Activated T-helper 1 cell treated with anti-CD3 and anti-CD28 coated beads, Interleukin-12 subunit alpha, Interleukin-12 subunit beta, Interleukin-2, Interleukin-4 antibody, amounts not matched to agents 30 ng/mL and 10 ng/mL and 1 ng/mL, durations not matched to agents 14 hours and 24 hours and 36 hours (primary cell): ENCODE measurements at regions of chr4 and their contacts with region 1.

Region 1: DNA sequence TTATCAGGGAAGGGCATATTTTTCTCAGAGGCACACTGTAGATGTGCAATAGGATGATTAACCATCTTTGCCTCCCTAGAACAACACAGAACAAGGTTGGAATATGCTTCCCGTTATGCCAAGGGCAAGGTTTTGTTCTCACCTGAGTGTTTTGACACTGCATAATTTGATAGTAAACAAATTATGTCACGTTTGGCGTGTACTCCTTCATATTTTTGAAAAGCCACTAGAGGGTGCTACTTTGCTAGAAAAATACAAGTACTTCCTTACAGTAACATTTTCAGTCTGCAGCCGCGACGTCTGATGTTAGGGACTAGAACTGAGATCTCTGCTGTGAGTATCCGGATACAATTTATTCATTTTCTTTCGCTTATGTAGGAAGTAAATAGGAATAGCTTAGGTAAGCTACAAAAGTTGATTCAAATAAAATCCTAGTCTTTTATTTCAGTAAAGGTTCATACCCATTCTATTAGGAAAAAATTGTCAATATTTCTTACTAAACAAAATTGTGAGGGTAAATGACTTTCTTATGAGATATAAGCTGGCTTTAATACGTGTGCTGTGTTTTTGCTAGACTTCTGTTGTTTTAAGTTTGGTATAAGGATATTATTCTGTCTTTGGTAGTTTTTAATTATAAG is 181.1 kb upstream of the WDFY3 start:
- DNase-seq: no peak
- H3K4me3 Mint-ChIP-seq: no peak overlapping the region
- H3K27ac Mint-ChIP-seq: no peak overlapping the region
- H3K4me1 Mint-ChIP-seq: no peaks in the 10 kb centered on the region
- H3K27me3 Mint-ChIP-seq: no peaks in the 10 kb centered on the region

Region 2: GRCh38 chr4:84938316-84938715 is 209.2 kb before region 1 on chr4:
- intact Hi-C with region 1: no loop called
- DNase-seq: no peak
- H3K4me3 Mint-ChIP-seq: no peak overlapping the region
- H3K27ac Mint-ChIP-seq: no peak overlapping the region
- H3K4me1 Mint-ChIP-seq: no peaks in the 10 kb centered on the region
- H3K27me3 Mint-ChIP-seq: no peaks in the 10 kb centered on the region

Region 3: GRCh38 chr4:85166316-85166715 is 18.8 kb after region 1 on chr4:
- intact Hi-C with region 1: no loop called
- DNase-seq: no peak
- H3K4me3 Mint-ChIP-seq: no peak overlapping the region
- H3K27ac Mint-ChIP-seq: no peak overlapping the region
- H3K4me1 Mint-ChIP-seq: no peaks in the 10 kb centered on the region
- H3K27me3 Mint-ChIP-seq: no peaks in the 10 kb centered on the region

Region 4: GRCh38 chr4:85280957-85281356 is 133.4 kb after region 1 on chr4:
- intact Hi-C with region 1: no loop called
- DNase-seq: no peak
- H3K4me3 Mint-ChIP-seq: no peak overlapping the region
- H3K27ac Mint-ChIP-seq: no peak overlapping the region
- H3K4me1 Mint-ChIP-seq: no peaks in the 10 kb centered on the region
- H3K27me3 Mint-ChIP-seq: no peaks in the 10 kb centered on the region

Region 5: DNA sequence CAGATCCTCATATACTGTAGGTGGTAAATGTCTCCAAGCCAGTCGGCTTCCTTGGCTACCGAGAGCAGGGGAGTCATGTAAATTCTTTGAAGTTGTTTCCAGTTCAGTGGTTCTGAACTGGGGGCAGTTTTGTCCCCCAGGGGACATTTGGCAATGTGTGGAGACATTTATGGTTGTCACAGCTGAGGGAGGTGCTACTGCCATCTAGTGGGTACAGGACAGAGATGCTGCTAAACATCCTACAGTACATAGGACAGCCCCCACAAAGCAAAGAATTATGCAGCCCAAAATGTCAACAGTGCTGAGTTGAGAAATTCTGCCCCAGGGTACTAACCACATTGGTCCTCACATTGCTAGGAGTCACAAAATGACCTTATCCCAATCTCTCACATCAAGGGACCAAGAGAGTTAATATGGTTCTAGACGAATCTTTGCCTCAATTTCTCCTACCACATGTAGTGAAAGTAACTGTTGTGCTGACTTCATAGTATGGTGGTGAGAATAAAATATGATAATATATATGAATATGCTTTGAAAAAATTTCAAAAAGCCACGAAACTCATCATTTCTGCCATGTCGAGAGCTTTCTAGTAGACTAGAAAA is 223.0 kb after region 1 on chr4:
- intact Hi-C with region 1: loop called (anchors 1 kb)
- DNase-seq: no peak
- H3K4me3 Mint-ChIP-seq: no peak overlapping the region
- H3K27ac Mint-ChIP-seq: no peak overlapping the region
- H3K4me1 Mint-ChIP-seq: no peaks in the 10 kb centered on the region
- H3K27me3 Mint-ChIP-seq: no peaks in the 10 kb centered on the region

Region 6: GRCh38 chr4:85747882-85748491 is 600.4 kb after region 1 on chr4:
- intact Hi-C with region 1: loop called (anchors 1 kb)
- DNase-seq: no peak
- H3K4me3 Mint-ChIP-seq: no peak overlapping the region
- H3K27ac Mint-ChIP-seq: no peak overlapping the region
- H3K4me1 Mint-ChIP-seq: no peaks in the 10 kb centered on the region
- H3K27me3 Mint-ChIP-seq: no peaks in the 10 kb centered on the region

Region 7: DNA sequence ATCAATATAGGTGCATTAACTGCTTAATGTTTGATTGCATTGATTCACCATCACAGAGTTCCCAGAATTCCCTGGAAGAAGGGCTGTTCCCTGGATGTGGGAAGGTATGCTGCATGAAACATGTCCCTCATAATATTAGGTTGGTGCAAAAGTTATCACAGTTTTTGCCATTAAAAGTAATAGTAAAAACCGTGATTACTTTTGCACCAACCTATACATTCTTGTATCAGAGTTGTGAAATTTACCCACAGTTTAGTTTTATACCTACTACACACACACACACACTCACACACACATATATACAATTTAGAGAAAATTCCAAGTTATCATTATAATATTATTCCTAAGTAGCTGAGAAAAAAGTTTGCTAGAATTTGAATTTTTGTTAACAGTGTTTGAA is 648.4 kb after region 1 on chr4:
- intact Hi-C with region 1: loop called (anchors 2 kb)
- DNase-seq: no peak
- H3K4me3 Mint-ChIP-seq: no peak overlapping the region
- H3K27ac Mint-ChIP-seq: no peak overlapping the region
- H3K4me1 Mint-ChIP-seq: no peaks in the 10 kb centered on the region
- H3K27me3 Mint-ChIP-seq: no peaks in the 10 kb centered on the region

Region 8: DNA sequence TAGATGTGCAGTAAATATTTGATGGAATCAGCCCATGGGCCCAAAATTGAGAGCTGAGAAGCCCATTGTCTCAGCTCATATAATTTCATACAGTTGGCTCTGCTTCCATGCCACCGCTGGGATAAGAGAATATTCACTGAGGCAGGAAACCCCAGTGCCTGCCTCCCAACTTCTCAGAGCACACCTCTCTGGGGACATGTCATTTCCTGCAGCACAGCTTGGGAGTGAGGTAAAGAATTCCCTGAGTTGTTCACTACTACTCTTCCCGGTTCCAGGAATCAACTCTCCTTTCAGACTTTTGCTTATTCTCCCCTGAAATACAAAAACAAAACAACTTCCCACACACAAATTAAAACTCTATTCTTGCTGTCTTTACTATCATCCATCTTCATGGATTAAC is 823.0 kb after region 1 on chr4:
- intact Hi-C with region 1: loop called (anchors 5 kb)
- DNase-seq: no peak
- H3K4me3 Mint-ChIP-seq: no peak overlapping the region
- H3K27ac Mint-ChIP-seq: no peak overlapping the region
- H3K4me1 Mint-ChIP-seq: no peaks in the 10 kb centered on the region
- H3K27me3 Mint-ChIP-seq: no peaks in the 10 kb centered on the region